PC-9 (cell line): ENCODE measurements at regions of chr20 and their contacts with region 1.

Region 1: GRCh38 chr20:35454881-35455609 is at the start of gene CEP250:
- DNase-seq: peak; percentile 87 to 98
- H3K4me3 ChIP-seq: peak within 1 kb of the TSS; percentile 78
- H3K27ac ChIP-seq: peak within 1 kb of the TSS; percentile 88
- H3K4me1 ChIP-seq: peaks cover 22% of the 10 kb centered on the region
- H3K27me3 ChIP-seq: no peaks in the 10 kb centered on the region
- CTCF ChIP-seq: no peak
- total RNA-seq, gene CEP250: 63.6 and 79.5 TPM in 2 replicates

Region 2: DNA sequence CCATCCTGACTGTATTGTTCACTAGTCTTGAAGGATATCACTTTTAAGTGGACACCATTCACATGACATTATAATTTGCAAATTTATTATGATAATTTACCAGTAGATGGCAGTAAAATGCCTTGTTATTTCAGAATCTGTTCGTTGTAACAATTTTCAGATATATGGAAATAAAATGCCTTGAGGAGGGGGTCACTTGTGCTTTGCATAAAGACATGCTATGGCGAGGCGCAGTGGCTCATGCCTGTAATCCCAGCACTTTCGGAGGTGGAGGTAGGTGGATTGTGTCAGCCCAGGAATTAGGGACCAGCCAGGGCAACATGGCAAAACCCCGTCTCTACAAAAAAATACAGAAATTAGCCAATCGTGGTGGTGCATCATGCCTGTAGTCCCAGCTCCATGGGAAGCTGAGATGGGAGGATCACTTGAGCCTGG is 620.6 kb before region 1 on chr20:
- CTCF ChIA-PET with region 1: no interaction called
- POLR2A ChIA-PET with region 1: no interaction called
- intact Hi-C with region 1: loop called (anchors 10 kb)
- DNase-seq: peak; percentile 10 to 52
- H3K4me3 ChIP-seq: no peak overlapping the region
- H3K27ac ChIP-seq: no peak overlapping the region
- H3K4me1 ChIP-seq: no peaks in the 10 kb centered on the region
- H3K27me3 ChIP-seq: no peaks in the 10 kb centered on the region
- CTCF ChIP-seq: peak; percentile 72

Region 3: GRCh38 chr20:35284267-35284991 is 170.6 kb before region 1 on chr20 and contains the start of gene EIF6:
- CTCF ChIA-PET with region 1: interaction called, 4 read pairs
- POLR2A ChIA-PET with region 1: interaction called, 15 read pairs
- intact Hi-C with region 1: no loop called
- DNase-seq: peak; percentile 73 to 89
- H3K4me3 ChIP-seq: peak within 1 kb of the TSS; percentile 88
- H3K27ac ChIP-seq: peak within 1 kb of the TSS; percentile 82
- H3K4me1 ChIP-seq: peaks cover 15% of the 10 kb centered on the region
- H3K27me3 ChIP-seq: no peaks in the 10 kb centered on the region
- CTCF ChIP-seq: no peak
- total RNA-seq, gene EIF6: 255 and 270 TPM in 2 replicates

Region 4: DNA sequence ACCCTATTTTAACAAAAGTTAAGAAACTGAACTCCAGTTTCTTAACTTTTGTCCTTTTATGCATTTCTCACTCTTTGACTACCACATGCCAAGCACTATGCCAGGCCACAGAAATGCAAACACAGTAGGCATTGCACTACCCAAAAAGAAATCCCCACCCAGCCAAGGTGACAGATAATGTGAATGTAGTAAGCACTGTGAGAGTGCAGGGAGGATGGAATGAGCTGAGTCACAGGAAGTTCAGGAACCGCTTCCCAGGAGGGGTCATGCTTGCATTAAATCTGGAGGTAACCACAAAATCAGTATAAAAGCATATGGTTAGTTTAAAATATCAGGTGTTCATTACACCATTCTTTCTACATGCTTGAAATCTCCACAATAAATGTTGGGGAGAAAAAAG is 142.7 kb before region 1 on chr20:
- CTCF ChIA-PET with region 1: interaction called, 3 read pairs
- POLR2A ChIA-PET with region 1: interaction called, 12 read pairs
- intact Hi-C with region 1: no loop called
- DNase-seq: peak; percentile 74 to 95
- H3K4me3 ChIP-seq: no peak overlapping the region
- H3K27ac ChIP-seq: peak overlapping the region; percentile 97
- H3K4me1 ChIP-seq: peaks cover 63% of the 10 kb centered on the region
- H3K27me3 ChIP-seq: no peaks in the 10 kb centered on the region
- CTCF ChIP-seq: no peak

Region 5: GRCh38 chr20:35421322-35421721 is 33.7 kb before region 1 on chr20:
- CTCF ChIA-PET with region 1: no interaction called
- POLR2A ChIA-PET with region 1: interaction called, 24 read pairs
- intact Hi-C with region 1: no loop called
- DNase-seq: no peak
- H3K4me3 ChIP-seq: no peak overlapping the region
- H3K27ac ChIP-seq: no peak overlapping the region
- H3K4me1 ChIP-seq: no peaks in the 10 kb centered on the region
- H3K27me3 ChIP-seq: no peaks in the 10 kb centered on the region
- CTCF ChIP-seq: no peak

Region 6: GRCh38 chr20:35929286-35929685 is 474.2 kb after region 1 on chr20:
- CTCF ChIA-PET with region 1: no interaction called
- POLR2A ChIA-PET with region 1: interaction called, 10 read pairs
- intact Hi-C with region 1: no loop called
- DNase-seq: no peak
- H3K4me3 ChIP-seq: no peak overlapping the region
- H3K27ac ChIP-seq: no peak overlapping the region
- H3K4me1 ChIP-seq: no peaks in the 10 kb centered on the region
- H3K27me3 ChIP-seq: no peaks in the 10 kb centered on the region
- CTCF ChIP-seq: no peak

Region 7: GRCh38 chr20:36573103-36573794 is 1118.2 kb after region 1 on chr20 and contains the start of gene TGIF2:
- CTCF ChIA-PET with region 1: no interaction called
- POLR2A ChIA-PET with region 1: no interaction called
- intact Hi-C with region 1: loop called (anchors 10 kb)
- DNase-seq: peak; percentile 52 to 91
- H3K4me3 ChIP-seq: peak within 1 kb of the TSS; percentile 75
- H3K27ac ChIP-seq: no peak within 1 kb of the TSS
- H3K4me1 ChIP-seq: peaks cover 18% of the 10 kb centered on the region
- H3K27me3 ChIP-seq: no peaks in the 10 kb centered on the region
- CTCF ChIP-seq: no peak
- total RNA-seq, gene TGIF2: 15.7 and 18.3 TPM in 2 replicates